Left ventricle myocardium inferior (tissue), 1 donor: ENCODE measurements at regions of chr5 and their contacts with region 1.

Region 1: DNA sequence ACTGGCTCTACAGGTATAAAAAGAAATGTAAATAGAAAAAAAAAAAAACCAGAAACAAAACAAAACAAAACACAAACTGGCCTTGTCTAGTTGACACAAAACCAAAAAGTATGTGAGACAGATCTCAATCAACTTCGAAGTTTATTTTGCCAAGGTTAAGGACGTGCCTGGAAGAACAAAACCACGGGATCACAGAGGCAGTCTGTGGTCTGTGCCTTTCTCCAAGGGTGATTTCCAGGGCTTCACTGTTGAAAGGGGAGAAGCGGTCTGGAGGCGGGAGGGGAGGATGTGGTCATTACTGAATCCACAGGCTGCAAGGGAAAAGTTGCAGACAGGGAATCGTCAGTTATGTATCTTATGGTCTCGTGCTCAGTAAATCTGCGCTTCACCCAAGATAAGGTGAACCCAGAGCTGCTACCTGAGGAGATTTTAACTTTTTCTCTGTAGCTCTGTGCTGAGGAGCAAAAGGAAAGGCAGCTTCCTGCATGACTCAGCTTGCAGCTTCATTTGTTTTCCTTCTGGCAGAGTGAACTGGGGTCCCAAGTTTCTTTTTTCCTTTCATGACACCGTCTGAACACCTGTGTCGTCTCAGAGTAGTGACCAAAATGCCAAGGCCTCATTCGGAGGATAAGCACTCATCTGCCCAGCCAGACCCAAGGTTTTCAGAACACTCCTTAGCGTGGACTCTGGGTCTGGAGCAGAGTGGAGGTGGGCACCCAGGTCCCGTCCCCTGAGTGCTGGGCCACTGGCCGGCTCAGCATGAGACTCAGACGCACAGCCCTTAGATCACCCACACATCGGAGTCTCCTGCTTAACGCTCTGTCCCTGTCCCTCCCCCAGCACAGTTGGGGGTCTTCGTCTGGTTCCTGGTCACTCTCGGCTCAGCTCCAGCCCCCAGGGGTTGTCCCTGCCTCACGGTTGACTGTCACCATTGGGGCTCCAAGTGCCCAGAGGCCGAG is 25.8 kb downstream of the ROPN1L start:
- DNase-seq: no peak
- H3K4me3 ChIP-seq: no peak overlapping the region
- H3K27ac ChIP-seq: no peak overlapping the region
- H3K4me1 ChIP-seq: peaks cover 8% of the 10 kb centered on the region
- H3K27me3 ChIP-seq: no peaks in the 10 kb centered on the region
- CTCF ChIP-seq: no peak

Region 2: DNA sequence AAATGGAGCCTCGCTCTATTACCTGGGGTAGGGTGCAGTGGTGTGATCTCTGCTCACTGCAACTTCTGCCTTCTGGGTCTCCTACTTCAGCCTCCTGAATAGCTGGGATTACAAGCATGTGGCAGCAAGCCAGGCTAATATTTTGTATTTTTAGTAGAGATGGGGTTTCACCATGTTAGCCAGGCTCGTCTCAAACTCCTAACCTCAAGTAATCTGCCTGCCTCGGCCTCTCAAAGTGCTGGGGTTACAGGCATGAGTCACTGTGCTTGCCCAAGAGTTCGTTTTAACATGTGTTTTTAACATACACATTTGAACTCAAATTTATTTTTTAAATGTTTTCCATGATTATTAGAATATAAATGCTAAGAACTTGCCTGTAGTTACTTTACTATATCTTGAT is 79.8 kb before region 1 on chr5:
- intact Hi-C with region 1: no loop called
- DNase-seq: no peak
- H3K4me3 ChIP-seq: no peak overlapping the region
- H3K27ac ChIP-seq: no peak overlapping the region
- H3K4me1 ChIP-seq: peaks cover 17% of the 10 kb centered on the region
- H3K27me3 ChIP-seq: no peaks in the 10 kb centered on the region
- CTCF ChIP-seq: no peak

Region 3: GRCh38 chr5:10563945-10564837 is 96.7 kb after region 1 on chr5 and contains the start of gene ANKRD33B:
- intact Hi-C with region 1: loop called (anchors 10 kb)
- DNase-seq: peak; percentile 76
- H3K4me3 ChIP-seq: peak within 1 kb of the TSS; percentile 92
- H3K27ac ChIP-seq: peak within 1 kb of the TSS; percentile 87
- H3K4me1 ChIP-seq: peaks cover 53% of the 10 kb centered on the region
- H3K27me3 ChIP-seq: no peaks in the 10 kb centered on the region
- CTCF ChIP-seq: no peak
- total RNA-seq, gene ANKRD33B: 15.2 TPM